ENCODE measurements at regions of chr9 and their contacts with region 1.

Region 1: GRCh38 chr9:37333288-37333687 is 89.2 kb upstream of the GRHPR start:
- H3K4me3 Mint-ChIP-seq: no peak overlapping the region
- H3K27ac Mint-ChIP-seq: no peak overlapping the region
- H3K4me1 Mint-ChIP-seq: no peaks in the 10 kb centered on the region
- H3K27me3 Mint-ChIP-seq: no peaks in the 10 kb centered on the region

Region 2: DNA sequence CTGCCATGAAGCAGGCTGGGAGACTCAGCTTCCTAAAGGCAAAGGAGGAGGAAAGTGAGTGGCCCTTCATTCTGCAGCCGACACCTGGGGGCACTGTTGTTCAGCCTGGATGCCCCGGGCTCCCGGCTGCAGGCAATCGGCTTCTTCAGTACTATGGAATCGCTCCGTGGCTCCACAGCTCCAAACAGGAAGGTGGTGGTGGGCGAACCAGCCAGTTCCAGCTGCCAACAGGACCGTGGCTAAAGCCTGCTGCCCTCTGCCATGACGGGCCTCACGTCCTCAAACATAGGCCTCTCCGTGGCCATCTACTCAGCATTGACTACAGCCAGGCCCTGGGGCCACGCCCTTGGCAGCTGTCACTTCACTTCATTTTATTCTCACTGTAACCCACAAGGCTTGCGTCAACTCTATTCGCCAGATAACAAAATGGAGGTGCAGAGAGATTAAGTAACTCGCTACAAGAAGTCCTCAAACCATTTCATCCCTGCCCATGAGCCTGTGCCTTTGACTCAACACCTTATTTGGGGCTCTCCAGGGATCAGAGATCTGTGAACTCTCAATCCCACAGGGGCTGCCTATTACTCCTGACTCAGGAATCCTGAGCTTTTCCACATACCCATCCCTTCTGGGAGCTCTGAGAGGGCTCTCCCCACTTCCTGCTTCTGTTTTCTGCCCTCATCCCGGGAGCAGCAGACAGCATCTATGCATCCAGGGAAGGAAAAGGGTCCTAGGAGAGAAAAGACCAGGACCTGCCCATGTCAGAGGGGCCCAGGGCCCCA is 337.2 kb before region 1 on chr9:
- intact Hi-C with region 1: loop called (anchors 10 kb)
- H3K4me3 Mint-ChIP-seq: peak overlapping the region; percentile 69
- H3K27ac Mint-ChIP-seq: no peak overlapping the region
- H3K4me1 Mint-ChIP-seq: no peaks in the 10 kb centered on the region
- H3K27me3 Mint-ChIP-seq: peaks cover 50% of the 10 kb centered on the region

Region 3: GRCh38 chr9:37283730-37284325 is 49.5 kb before region 1 on chr9:
- intact Hi-C with region 1: no loop called
- H3K4me3 Mint-ChIP-seq: no peak overlapping the region
- H3K27ac Mint-ChIP-seq: no peak overlapping the region
- H3K4me1 Mint-ChIP-seq: no peaks in the 10 kb centered on the region
- H3K27me3 Mint-ChIP-seq: no peaks in the 10 kb centered on the region